B cell (primary cell): ENCODE measurements at regions of chr1 and their contacts with region 1.

Region 1: DNA sequence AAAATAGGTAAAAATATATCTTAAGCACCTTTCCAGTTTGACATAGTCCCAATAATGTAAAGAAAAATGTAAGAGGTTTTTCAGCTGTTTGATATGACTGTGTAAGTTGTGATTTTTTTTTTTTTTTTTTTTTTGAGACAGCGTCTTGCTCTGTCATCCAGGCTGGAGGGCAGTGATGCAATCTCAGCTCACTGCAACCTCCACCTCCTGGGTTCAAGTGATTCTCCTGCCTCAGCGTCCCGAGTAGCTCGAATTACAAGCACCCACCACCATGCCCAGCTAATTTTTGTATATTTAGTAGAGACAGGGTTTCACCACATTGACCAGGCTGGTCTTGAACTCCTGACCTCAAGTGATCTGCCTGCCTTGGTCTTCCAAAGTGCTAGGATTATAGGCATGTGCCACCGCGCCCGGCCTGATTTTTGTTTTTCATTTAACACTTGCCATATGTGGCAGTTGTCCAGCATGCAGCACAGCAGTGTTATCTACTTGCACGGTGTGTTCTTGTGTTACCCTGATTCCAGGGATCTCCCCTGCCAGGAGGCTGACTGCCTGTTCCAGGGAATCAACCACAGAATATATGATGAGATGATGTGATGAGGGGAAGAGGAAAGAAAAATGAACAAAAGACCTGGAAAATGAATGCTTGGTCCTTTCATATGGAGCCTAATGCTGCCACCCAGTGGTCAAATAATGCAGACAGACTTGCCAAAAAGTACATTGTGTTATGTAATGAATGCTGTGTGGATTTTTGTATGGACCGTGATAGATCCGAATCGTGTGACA is 79.0 kb downstream of the RAVER2 start:
- DNase-seq: peak; percentile 76
- ATAC-seq: peak; percentile 58
- H3K4me3 ChIP-seq: no peak overlapping the region
- H3K4me3 Mint-ChIP-seq: no peak overlapping the region
- H3K27ac ChIP-seq: no peak overlapping the region
- H3K27ac Mint-ChIP-seq: no peak overlapping the region
- H3K4me1 ChIP-seq: peaks cover 2 to 9% of the 10 kb centered on the region in 2 donors
- H3K4me1 Mint-ChIP-seq: peaks cover 24% of the 10 kb centered on the region
- H3K27me3 ChIP-seq: no peaks in the 10 kb centered on the region
- H3K27me3 Mint-ChIP-seq: no peaks in the 10 kb centered on the region
- CTCF ChIP-seq: peak; percentile 89

Region 2: GRCh38 chr1:63615768-63616420 is 1208.0 kb before region 1 on chr1:
- CTCF ChIA-PET with region 1: interaction called, 3 read pairs
- POLR2A ChIA-PET with region 1: no interaction called
- intact Hi-C with region 1: loop called (anchors 10 kb)
- DNase-seq: peak; percentile 80
- ATAC-seq: peak; percentile 71
- H3K4me3 ChIP-seq: no peak overlapping the region
- H3K4me3 Mint-ChIP-seq: no peak overlapping the region
- H3K27ac ChIP-seq: no peak overlapping the region
- H3K27ac Mint-ChIP-seq: no peak overlapping the region
- H3K4me1 ChIP-seq: no peaks in the 10 kb centered on the region
- H3K4me1 Mint-ChIP-seq: no peaks in the 10 kb centered on the region
- H3K27me3 ChIP-seq: no peaks in the 10 kb centered on the region
- H3K27me3 Mint-ChIP-seq: no peaks in the 10 kb centered on the region
- CTCF ChIP-seq: peak; percentile 91

Region 3: DNA sequence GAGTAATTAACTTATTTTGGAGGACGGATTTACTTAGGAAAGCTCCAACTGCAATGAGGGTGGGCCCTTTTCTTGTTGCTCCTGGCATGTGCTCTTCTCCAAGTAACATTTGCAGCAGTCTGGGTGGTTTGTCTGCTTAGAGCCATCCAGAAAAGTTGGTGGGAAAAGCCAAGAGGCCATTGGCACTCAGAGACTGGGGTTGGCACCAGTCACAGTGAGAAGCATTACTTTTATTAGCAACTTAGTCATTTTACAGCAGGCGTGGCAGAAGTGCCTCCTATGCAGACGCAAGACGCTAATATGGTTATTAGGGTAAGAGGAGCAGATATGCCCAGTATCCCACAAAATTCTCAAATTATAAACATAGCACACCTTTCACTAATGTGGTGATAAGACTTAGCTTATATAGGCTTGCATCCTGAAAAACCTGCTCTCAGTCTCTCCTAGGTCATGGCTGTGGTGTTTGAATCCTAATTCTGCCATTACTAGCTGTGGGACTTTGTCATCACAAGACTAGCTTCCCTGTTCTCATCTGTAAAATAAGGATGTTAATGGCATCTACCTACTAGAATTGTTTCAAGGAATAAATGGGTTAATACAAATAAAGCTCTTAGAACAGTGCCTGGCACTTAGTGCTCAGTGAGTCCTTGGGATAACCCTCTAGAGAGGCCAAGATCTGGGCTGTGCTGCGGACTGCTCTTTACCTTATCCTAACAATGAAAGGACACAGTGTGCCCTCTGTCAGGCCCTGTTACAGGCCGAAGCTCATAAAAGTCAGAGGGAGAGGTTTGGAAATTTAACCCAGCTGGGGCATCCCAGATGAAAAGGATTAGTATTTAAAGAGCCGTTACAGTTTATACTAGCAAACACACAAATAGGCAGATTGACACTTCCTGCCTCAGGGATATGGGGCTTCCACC is 895.4 kb before region 1 on chr1:
- CTCF ChIA-PET with region 1: no interaction called
- POLR2A ChIA-PET with region 1: no interaction called
- intact Hi-C with region 1: no loop called
- DNase-seq: no peak
- ATAC-seq: no peak
- H3K4me3 ChIP-seq: no peak overlapping the region
- H3K4me3 Mint-ChIP-seq: no peak overlapping the region
- H3K27ac ChIP-seq: no peak overlapping the region
- H3K27ac Mint-ChIP-seq: no peak overlapping the region
- H3K4me1 ChIP-seq: no peaks in the 10 kb centered on the region
- H3K4me1 Mint-ChIP-seq: no peaks in the 10 kb centered on the region
- H3K27me3 ChIP-seq: no peaks in the 10 kb centered on the region
- H3K27me3 Mint-ChIP-seq: no peaks in the 10 kb centered on the region
- CTCF ChIP-seq: no peak

Region 4: DNA sequence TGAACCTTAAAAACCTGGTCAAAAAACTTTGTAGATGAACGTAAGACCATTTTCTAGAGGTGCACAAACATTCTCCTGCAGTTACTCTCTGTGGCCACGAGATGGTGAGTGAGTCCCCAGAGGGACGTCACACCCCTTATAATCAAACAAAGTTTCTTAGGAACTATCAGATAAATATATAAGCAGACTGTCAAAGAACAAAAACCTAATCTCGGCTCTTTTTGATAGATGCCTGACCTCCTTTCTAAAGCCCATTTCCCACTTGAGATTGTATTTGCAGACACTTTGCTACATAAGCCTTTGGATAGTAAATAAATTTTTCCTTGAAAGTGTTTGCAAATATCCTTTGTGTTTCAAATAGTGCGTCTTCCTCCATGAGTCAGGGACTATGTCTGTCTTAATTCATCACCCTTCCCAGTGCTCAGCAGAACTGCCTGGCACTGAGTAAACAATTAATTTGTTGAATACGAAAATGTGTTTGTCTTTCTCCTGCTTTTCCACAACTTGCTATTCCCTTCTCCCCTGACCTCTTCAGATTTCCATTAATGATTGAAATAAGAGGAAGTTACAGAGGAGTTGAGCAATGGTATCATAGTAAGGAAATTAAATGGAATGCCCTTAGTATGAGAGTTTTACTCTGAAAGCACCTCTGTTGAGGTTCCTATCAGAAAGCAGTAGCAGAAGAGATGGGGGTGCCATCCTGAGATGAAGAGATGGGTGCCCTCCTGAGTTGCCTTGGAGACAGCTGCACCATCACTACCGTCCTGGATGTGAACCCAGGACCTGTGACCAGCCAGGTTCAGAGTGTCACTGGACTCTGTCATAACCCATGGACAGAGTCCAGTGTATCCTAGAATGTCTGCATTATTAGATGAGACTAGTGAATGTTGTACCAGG is 136.8 kb before region 1 on chr1:
- CTCF ChIA-PET with region 1: interaction called, 25 read pairs
- POLR2A ChIA-PET with region 1: no interaction called
- intact Hi-C with region 1: loop called (anchors 1 kb)
- DNase-seq: peak; percentile 55
- ATAC-seq: peak; percentile 69
- H3K4me3 ChIP-seq: no peak overlapping the region
- H3K4me3 Mint-ChIP-seq: no peak overlapping the region
- H3K27ac ChIP-seq: no peak overlapping the region
- H3K27ac Mint-ChIP-seq: no peak overlapping the region
- H3K4me1 ChIP-seq: no peaks in the 10 kb centered on the region
- H3K4me1 Mint-ChIP-seq: no peaks in the 10 kb centered on the region
- H3K27me3 ChIP-seq: no peaks in the 10 kb centered on the region
- H3K27me3 Mint-ChIP-seq: peaks cover 11% of the 10 kb centered on the region
- CTCF ChIP-seq: peak; percentile 89

Region 5: DNA sequence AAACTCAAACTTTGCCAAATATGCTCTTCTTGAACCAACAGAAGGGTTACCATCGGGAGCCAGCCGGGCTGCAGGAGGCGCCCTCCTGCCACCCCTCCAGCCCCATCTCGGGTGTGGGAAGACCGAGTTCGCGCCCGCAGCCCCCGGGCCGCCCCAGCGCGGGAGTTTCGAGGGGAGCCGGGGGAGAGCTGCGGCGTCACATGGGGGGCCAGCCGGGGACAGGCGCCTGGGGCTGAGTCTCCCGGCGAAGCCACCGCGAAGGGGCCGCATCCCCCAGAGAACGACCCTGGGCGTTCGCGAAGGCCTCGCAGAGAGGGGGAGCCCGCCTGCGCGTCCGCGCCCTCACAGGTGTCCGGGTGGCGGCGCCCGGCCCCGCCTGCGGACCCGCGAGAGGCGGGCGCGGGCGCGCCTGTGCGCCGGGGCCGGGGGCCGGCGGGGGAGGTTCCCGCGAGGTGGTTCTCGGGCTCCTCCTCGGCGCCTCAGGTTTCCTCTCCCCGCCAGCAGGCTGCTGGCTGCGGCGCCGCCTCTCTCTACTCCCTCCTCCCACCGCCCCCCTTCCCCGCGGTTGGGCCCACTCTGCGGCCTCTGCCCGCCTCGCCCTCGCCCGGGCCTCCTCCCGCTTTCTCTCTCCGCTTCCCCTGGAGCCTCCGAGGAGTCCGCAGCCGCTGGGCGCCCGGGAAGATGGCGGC is 79.2 kb before region 1 on chr1 and contains the start of gene RAVER2:
- CTCF ChIA-PET with region 1: interaction called, 11 read pairs
- POLR2A ChIA-PET with region 1: no interaction called
- intact Hi-C with region 1: loop called (anchors 1 kb)
- DNase-seq: peak; percentile 70
- ATAC-seq: peak; percentile 74
- H3K4me3 ChIP-seq: peak within 1 kb of the TSS in 4 of 5 experiments; percentile 48 to 74 (median 60)
- H3K4me3 Mint-ChIP-seq: peak within 1 kb of the TSS; percentile 91
- H3K27ac ChIP-seq: peak within 1 kb of the TSS in 1 of 2 donors; percentile 36
- H3K27ac Mint-ChIP-seq: peak within 1 kb of the TSS; percentile 76
- H3K4me1 ChIP-seq: peaks cover 14 to 16% of the 10 kb centered on the region in 2 donors
- H3K4me1 Mint-ChIP-seq: peaks cover 18% of the 10 kb centered on the region
- H3K27me3 ChIP-seq: no peaks in the 10 kb centered on the region
- H3K27me3 Mint-ChIP-seq: peaks cover 17% of the 10 kb centered on the region
- CTCF ChIP-seq: peak; percentile 26
- total RNA-seq, gene RAVER2: 1.4 and 1.5 TPM in 2 replicates

Region 6: DNA sequence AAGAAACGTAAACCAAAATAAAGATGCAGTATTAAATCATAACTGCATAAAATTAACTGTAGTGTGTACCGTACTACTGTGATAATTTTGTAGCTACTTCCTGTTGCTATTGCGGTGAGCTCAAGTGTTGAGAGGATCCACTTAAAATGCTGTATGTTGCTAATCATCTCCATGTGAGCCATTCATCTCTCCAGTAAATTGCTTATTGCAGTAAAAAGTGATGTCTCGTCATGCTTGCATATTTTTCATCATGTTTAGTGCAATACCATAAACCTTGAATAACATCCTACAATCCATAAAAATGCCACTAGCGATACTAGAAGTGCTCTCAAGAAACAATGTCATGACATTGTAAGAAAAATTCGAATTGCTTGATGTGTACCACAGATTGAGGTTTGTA is 12.8 kb before region 1 on chr1:
- CTCF ChIA-PET with region 1: interaction called, 12 read pairs
- POLR2A ChIA-PET with region 1: no interaction called
- intact Hi-C with region 1: no loop called
- DNase-seq: no peak
- ATAC-seq: no peak
- H3K4me3 ChIP-seq: no peak overlapping the region
- H3K4me3 Mint-ChIP-seq: no peak overlapping the region
- H3K27ac ChIP-seq: no peak overlapping the region
- H3K27ac Mint-ChIP-seq: no peak overlapping the region
- H3K4me1 ChIP-seq: no peaks in the 10 kb centered on the region
- H3K4me1 Mint-ChIP-seq: no peaks in the 10 kb centered on the region
- H3K27me3 ChIP-seq: no peaks in the 10 kb centered on the region
- H3K27me3 Mint-ChIP-seq: no peaks in the 10 kb centered on the region
- CTCF ChIP-seq: no peak

Region 7: DNA sequence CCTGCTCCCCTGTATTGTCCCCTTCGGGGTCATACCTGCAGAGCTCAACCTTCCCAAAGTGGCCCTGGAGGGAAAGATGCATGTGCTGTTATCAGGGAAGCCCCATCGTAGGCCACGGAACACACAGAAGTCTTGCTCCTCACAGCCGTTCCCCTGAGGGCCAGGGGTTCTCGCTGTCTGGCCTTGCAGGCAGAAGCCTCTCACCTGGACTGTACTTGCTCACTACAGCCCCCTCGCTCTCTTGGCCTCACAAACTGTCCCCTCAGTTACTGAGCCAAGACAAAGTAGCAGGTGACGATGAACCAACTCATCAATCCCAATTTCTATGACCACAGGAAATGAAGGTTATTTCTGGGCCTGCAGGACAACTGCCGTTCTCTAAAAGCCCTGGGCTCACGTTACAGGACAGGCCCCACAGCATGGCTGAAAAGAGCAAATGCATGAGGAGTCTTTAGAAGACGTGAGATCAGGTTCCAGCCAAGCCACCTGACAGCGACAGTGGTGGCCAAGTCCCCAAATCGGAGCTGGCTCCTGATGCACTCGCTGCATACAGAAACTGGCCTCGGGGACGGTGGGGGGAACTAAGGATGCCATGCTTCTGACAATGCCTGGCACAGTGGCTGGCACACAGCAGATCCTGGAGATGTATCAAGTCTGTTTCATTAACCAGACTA is 16.0 kb after region 1 on chr1:
- CTCF ChIA-PET with region 1: interaction called, 14 read pairs
- POLR2A ChIA-PET with region 1: no interaction called
- intact Hi-C with region 1: no loop called
- DNase-seq: no peak
- ATAC-seq: no peak
- H3K4me3 ChIP-seq: no peak overlapping the region
- H3K4me3 Mint-ChIP-seq: no peak overlapping the region
- H3K27ac ChIP-seq: no peak overlapping the region
- H3K27ac Mint-ChIP-seq: no peak overlapping the region
- H3K4me1 ChIP-seq: peaks cover 15 to 17% of the 10 kb centered on the region in 2 donors
- H3K4me1 Mint-ChIP-seq: peaks cover 20% of the 10 kb centered on the region
- H3K27me3 ChIP-seq: no peaks in the 10 kb centered on the region
- H3K27me3 Mint-ChIP-seq: no peaks in the 10 kb centered on the region
- CTCF ChIP-seq: no peak

Region 8: DNA sequence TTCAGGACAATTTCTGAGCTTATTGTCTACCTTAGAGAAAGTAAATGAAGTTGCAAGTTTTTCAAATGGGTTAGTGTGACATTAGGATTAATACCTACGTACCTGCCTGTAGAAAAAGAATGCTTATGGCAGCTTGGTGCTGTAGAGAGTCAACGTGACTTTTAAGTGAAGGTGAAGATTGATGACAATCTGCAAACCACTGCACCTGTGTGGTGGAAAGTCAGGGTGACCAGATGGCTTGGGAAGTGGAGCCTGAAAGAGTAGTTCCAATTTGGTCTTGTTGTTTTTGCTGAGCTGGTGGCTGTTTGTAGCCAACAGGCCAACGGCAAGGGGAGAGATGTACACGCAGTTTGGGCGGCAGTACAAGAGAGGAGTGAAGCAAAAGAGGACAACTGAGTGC is 220.5 kb after region 1 on chr1:
- CTCF ChIA-PET with region 1: interaction called, 8 read pairs
- POLR2A ChIA-PET with region 1: no interaction called
- intact Hi-C with region 1: loop called (anchors 5 kb)
- DNase-seq: no peak
- ATAC-seq: no peak
- H3K4me3 ChIP-seq: no peak overlapping the region
- H3K4me3 Mint-ChIP-seq: no peak overlapping the region
- H3K27ac ChIP-seq: no peak overlapping the region
- H3K27ac Mint-ChIP-seq: no peak overlapping the region
- H3K4me1 ChIP-seq: peaks cover 14% of the 10 kb centered on the region in 2 donors
- H3K4me1 Mint-ChIP-seq: peaks cover 14% of the 10 kb centered on the region
- H3K27me3 ChIP-seq: no peaks in the 10 kb centered on the region
- H3K27me3 Mint-ChIP-seq: no peaks in the 10 kb centered on the region
- CTCF ChIP-seq: no peak